Activated CD8-positive, alpha-beta memory T cell treated with anti-CD3 and anti-CD28 coated beads, Interleukin-2, amount 10 ng/mL, durations not matched to agents 7 days and 5 days (primary cell): ENCODE measurements at regions of chr2 and their contacts with region 1.

Region 1: DNA sequence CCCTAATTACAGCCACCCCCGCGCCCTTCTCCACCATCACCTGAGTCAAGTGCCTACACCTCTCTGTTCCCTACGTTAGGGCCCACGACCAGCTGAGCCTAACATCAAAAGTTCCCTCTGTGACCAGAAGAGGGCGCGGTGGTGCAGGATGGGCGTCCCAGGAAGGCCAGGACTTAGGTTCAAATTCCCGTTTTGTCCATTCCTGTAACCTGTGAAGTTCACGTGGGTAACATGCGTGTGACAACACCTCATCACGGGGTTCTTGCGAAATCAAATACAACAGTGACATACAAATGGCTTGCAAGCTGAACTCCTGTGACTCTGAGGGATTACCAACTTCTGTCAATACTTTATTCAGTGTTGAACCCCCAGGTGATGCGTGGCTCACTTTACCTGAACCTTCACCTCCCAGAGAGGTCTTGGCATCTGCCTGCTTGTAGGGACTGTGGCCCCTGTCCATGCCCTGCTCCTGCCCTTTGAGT is 207.9 kb downstream of the ARL4C start:
- DNase-seq: peak; percentile 83
- ATAC-seq: no peak
- H3K4me3 Mint-ChIP-seq: peak overlapping the region; percentile 64
- H3K27ac Mint-ChIP-seq: peak overlapping the region; percentile 99
- H3K4me1 Mint-ChIP-seq: peaks cover 79% of the 10 kb centered on the region
- H3K27me3 Mint-ChIP-seq: no peaks in the 10 kb centered on the region

Region 2: GRCh38 chr2:234135720-234136221 is 153.2 kb before region 1 on chr2:
- CTCF ChIA-PET with region 1: interaction called, 57 read pairs
- DNase-seq: peak; percentile 77
- ATAC-seq: peak; percentile 90
- H3K4me3 Mint-ChIP-seq: no peak overlapping the region
- H3K27ac Mint-ChIP-seq: peak overlapping the region; percentile 48
- H3K4me1 Mint-ChIP-seq: peaks cover 22% of the 10 kb centered on the region
- H3K27me3 Mint-ChIP-seq: peaks cover 3% of the 10 kb centered on the region

Region 3: GRCh38 chr2:234203135-234203984 is 85.7 kb before region 1 on chr2:
- CTCF ChIA-PET with region 1: no interaction called
- DNase-seq: no peak
- ATAC-seq: no peak
- H3K4me3 Mint-ChIP-seq: no peak overlapping the region
- H3K27ac Mint-ChIP-seq: no peak overlapping the region
- H3K4me1 Mint-ChIP-seq: peaks cover 3% of the 10 kb centered on the region
- H3K27me3 Mint-ChIP-seq: no peaks in the 10 kb centered on the region

Region 4: GRCh38 chr2:234275515-234275914 is 13.5 kb before region 1 on chr2:
- CTCF ChIA-PET with region 1: interaction called, 28 read pairs
- DNase-seq: no peak
- ATAC-seq: no peak
- H3K4me3 Mint-ChIP-seq: no peak overlapping the region
- H3K27ac Mint-ChIP-seq: peak overlapping the region; percentile 66
- H3K4me1 Mint-ChIP-seq: peaks cover 75% of the 10 kb centered on the region
- H3K27me3 Mint-ChIP-seq: no peaks in the 10 kb centered on the region

Region 5: DNA sequence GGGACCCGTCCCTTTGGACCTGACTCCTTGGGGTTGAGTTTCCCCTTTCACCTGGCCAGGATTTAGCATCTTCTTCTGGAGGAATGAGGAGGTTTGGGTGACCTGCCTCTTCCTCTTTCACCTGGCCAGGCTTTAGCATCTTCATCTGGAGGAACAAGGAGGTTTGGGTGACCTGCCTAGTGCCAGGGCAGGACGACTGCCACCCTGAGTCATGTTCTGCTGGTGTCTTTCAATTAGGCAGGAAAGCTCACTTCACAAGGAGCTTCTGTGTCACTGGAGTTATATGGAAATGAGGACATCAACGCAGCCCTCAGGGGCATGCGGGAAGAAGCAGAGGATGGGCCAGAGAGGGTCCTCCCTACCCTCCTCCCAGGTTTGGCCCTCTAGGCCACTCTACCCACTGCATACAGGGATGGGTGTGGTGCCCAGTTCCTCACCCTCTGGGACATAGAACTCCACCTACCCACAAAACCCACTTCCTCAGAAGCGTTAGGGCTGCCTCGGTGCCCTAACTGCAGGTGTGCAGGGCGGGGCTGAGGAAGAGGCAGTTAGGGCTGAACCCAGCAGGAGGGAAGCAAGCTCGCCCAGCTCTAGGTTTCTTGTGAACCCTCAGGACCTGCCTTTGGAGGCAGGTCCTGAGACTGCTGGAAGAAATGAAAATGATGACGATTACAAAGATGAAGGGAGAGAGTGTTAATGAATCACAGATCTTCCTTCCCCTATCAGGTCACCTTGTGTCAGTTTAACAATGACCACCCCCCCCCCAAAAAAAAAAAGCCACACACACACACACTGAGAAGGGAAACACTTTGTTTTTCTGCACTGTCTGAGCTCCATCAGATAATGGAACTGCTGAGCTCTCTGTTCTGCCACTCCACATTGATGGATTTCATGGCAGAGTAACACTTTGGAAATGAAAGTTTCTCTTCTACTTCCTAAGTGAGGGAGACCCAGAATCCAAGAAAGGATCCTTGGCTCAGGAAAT is 136.9 kb after region 1 on chr2:
- CTCF ChIA-PET with region 1: interaction called, 16 read pairs
- DNase-seq: peak; percentile 92
- ATAC-seq: peak; percentile 82
- H3K4me3 Mint-ChIP-seq: peak overlapping the region; percentile 41
- H3K27ac Mint-ChIP-seq: peak overlapping the region; percentile 97
- H3K4me1 Mint-ChIP-seq: peaks cover 80% of the 10 kb centered on the region
- H3K27me3 Mint-ChIP-seq: no peaks in the 10 kb centered on the region

Region 6: GRCh38 chr2:234463626-234464290 is 174.7 kb after region 1 on chr2:
- CTCF ChIA-PET with region 1: interaction called, 11 read pairs
- DNase-seq: peak; percentile 80
- ATAC-seq: peak; percentile 75
- H3K4me3 Mint-ChIP-seq: peak overlapping the region; percentile 70
- H3K27ac Mint-ChIP-seq: peak overlapping the region; percentile 85
- H3K4me1 Mint-ChIP-seq: peaks cover 53% of the 10 kb centered on the region
- H3K27me3 Mint-ChIP-seq: no peaks in the 10 kb centered on the region

Region 7: DNA sequence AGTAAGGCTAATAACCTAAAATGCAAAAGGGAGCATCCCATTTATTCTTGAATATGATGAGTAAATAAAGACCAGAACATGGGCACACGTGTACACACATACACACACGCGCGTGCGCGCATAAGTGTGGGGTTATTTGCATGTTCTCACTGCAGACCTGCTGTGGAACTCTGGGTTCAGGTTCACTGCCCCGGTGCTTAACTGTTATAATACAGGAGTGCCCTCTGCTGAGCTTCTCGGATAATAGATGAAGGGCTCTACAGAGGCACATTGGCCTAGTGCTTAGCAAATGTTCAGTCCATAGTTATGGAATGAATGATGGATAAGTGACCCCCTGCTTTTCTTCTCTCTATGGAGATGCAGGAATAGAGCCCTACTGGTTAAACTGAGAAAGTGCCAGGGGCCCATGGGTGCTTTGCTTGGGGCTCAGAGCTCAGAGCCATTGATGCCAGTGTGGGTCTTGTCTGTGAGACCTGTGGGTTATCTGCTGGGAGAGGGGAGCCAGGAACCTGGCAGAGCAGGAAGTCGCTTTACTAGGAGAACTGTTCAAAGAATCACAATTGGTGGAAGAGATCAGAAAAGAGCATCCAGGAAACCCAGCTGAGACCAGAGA is 211.5 kb after region 1 on chr2:
- CTCF ChIA-PET with region 1: interaction called, 103 read pairs
- DNase-seq: peak; percentile 86
- ATAC-seq: peak; percentile 52
- H3K4me3 Mint-ChIP-seq: no peak overlapping the region
- H3K27ac Mint-ChIP-seq: peak overlapping the region; percentile 23
- H3K4me1 Mint-ChIP-seq: peaks cover 31% of the 10 kb centered on the region
- H3K27me3 Mint-ChIP-seq: peaks cover 13% of the 10 kb centered on the region